ENCODE measurements at regions of chr22 and their contacts with region 1.

Region 1: DNA sequence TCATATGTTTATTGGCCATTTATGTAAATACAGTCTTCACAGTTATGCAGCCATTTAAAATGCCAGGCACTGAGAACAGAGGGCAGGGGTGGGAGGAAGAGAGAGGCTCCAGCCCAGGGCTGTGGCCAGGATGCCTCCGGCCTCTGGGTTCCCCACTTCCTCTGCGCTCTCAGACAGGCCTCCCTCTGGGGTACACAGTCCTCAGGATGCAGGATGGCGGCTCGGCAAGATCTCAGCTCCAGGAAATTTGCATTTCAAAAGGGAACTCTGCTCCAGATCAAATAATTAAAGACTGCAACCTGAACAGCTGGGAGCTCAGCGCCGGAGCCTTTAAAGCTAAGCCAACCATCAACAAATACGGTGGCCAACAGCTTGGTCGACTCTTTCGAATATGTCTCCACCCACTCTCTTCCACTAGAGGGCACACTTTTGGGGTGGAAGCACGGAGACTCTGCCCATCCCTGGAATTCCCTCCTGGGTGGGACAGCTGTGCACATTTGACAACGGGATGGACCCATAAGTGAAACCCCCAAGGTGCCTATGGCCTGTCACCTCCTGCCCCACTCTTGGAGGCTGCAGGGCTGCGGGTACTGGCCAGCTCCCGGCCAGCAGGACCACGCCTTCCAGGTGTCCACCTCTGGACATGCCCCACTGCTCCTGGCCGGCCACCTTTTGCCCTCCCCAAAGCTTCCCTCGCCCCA is 1044.7 kb downstream of the BRD1 start:
- DNase-seq: peak in 1 of 2 experiments; percentile 56
- H3K4me3 ChIP-seq: no peak overlapping the region
- H3K27ac ChIP-seq: no peak overlapping the region
- H3K4me1 ChIP-seq: peaks cover 0 to 3% (median 3%) of the 10 kb centered on the region in 4 experiments; a peak in 3 of 7 replicates
- H3K27me3 ChIP-seq: no peaks in the 10 kb centered on the region
- CTCF ChIP-seq: peak; percentile 70 to 72 (median 71)
- EP300 ChIP-seq: no peak
- POLR2A ChIP-seq: no peak
- RAD21 ChIP-seq: peak; percentile 56 to 62

Region 2: GRCh38 chr22:48702573-48703264 is 80.2 kb before region 1 on chr22:
- CTCF ChIA-PET with region 1: no interaction called
- POLR2A ChIA-PET with region 1: no interaction called
- DNase-seq: no peak
- H3K4me3 ChIP-seq: no peak overlapping the region
- H3K27ac ChIP-seq: no peak overlapping the region
- H3K4me1 ChIP-seq: peaks cover 0 to 8% (median 1%) of the 10 kb centered on the region in 4 experiments; a peak in 2 of 7 replicates
- H3K27me3 ChIP-seq: no peaks in the 10 kb centered on the region; a peak in 1 of 7 replicates
- CTCF ChIP-seq: no peak
- EP300 ChIP-seq: no peak
- POLR2A ChIP-seq: no peak
- RAD21 ChIP-seq: no peak

Region 3: DNA sequence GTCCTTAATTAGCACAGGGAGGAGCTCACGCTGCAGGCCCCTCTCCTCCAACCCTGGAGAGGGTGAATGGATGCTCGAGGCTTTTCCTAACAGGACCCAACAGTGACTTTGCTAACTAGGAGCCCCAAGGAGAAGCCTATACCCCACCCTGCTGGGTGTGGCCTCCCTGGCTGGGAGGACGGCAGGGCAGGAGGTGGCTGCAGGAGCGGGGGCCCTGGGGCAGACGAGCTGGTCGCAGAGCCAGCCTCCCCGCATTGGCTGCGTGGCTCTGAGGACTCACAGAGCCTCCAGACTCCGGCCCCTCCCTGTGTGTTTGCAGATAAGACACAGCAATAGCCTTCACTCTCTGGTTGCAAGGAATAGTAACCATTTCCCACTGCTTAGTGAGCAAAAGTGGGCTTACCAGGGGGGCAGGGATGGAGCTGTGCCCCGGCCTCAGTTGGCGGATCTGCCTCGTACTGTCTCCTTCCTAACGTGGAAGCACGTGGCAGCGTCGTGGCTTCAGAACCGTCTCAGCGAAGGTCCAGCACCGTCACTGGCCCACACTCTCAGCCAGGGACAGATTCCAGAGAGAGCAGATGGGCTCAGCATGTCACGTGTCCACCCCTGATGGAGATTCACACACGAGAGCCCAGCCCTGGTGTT is 42.8 kb before region 1 on chr22:
- CTCF ChIA-PET with region 1: interaction called, 10 read pairs
- POLR2A ChIA-PET with region 1: no interaction called
- DNase-seq: peak in 1 of 2 experiments; percentile 33
- H3K4me3 ChIP-seq: no peak overlapping the region
- H3K27ac ChIP-seq: no peak overlapping the region
- H3K4me1 ChIP-seq: no peaks in the 10 kb centered on the region; a peak in 1 of 7 replicates
- H3K27me3 ChIP-seq: no peaks in the 10 kb centered on the region
- CTCF ChIP-seq: no peak
- EP300 ChIP-seq: no peak
- POLR2A ChIP-seq: no peak
- RAD21 ChIP-seq: no peak

Region 4: GRCh38 chr22:48765595-48765994 is 17.4 kb before region 1 on chr22:
- CTCF ChIA-PET with region 1: no interaction called
- POLR2A ChIA-PET with region 1: no interaction called
- DNase-seq: no peak
- H3K4me3 ChIP-seq: no peak overlapping the region
- H3K27ac ChIP-seq: no peak overlapping the region
- H3K4me1 ChIP-seq: no peaks in the 10 kb centered on the region
- H3K27me3 ChIP-seq: no peaks in the 10 kb centered on the region
- CTCF ChIP-seq: no peak
- EP300 ChIP-seq: no peak
- POLR2A ChIP-seq: no peak
- RAD21 ChIP-seq: no peak

Region 5: DNA sequence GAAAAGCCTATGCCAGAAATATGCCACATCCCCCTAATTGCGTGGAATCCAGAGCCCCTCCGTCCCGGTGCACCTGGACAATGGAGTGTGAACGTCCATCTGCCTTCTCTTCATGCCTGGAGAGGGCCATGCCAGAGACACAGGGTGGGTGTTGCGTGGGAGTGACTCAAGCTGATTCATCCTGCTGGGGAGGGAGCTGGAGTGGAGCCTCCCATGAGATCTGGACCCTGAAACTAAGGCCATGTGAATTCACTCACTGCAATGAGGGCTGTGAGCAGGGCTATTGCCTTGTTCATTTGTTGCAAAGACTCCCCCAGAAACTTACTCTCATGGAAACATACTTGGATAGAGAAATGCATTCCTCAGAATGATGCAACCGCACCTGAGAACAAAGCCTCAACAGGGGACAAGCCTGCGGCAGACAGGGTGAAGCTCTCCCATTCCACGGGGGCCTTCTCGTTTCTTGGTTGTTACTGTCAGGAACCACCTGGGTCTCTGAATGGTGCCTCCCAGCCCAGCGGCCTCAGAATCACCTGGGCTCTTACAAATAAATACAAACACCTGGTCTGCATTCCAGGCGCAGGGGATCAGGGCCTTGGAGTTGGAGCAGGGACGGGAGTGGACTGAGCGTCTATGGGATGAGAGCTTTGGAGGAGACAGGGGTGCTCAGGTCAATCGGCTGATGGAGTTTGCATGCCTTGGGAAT is 13.5 kb after region 1 on chr22:
- CTCF ChIA-PET with region 1: interaction called, 18 read pairs
- POLR2A ChIA-PET with region 1: interaction called, 5 read pairs
- DNase-seq: peak in 1 of 2 experiments; percentile 53
- H3K4me3 ChIP-seq: peak overlapping the region in 1 of 4 experiments; percentile 11; a peak in 1 of 8 replicates
- H3K27ac ChIP-seq: peak overlapping the region; percentile 74
- H3K4me1 ChIP-seq: peaks cover 0 to 5% (median 5%) of the 10 kb centered on the region in 4 experiments; a peak in 3 of 7 replicates
- H3K27me3 ChIP-seq: no peaks in the 10 kb centered on the region; a peak in 1 of 7 replicates
- CTCF ChIP-seq: no peak
- EP300 ChIP-seq: peak in 1 of 2 experiments; percentile 86; a peak in 1 of 3 replicates
- POLR2A ChIP-seq: no peak
- RAD21 ChIP-seq: 0 out of 4 replicates have a peak, but pooled peaks of 1 of the 2 experiments have one; percentile 6

Region 6: GRCh38 chr22:48981371-48982061 is 198.6 kb after region 1 on chr22:
- CTCF ChIA-PET with region 1: no interaction called
- POLR2A ChIA-PET with region 1: no interaction called
- DNase-seq: no peak
- H3K4me3 ChIP-seq: no peak overlapping the region
- H3K27ac ChIP-seq: no peak overlapping the region
- H3K4me1 ChIP-seq: no peaks in the 10 kb centered on the region; a peak in 1 of 7 replicates
- H3K27me3 ChIP-seq: peaks cover 0 to 2% (median 0%) of the 10 kb centered on the region in 4 experiments; a peak in 1 of 7 replicates
- CTCF ChIP-seq: no peak
- EP300 ChIP-seq: no peak
- POLR2A ChIP-seq: no peak
- RAD21 ChIP-seq: no peak